Heart left ventricle (tissue), 16 donors: ENCODE measurements at regions of chr10 and their contacts with region 1.

Region 1: GRCh38 chr10:69004821-69005220 is 16.2 kb downstream of the KIFBP start:
- DNase-seq: no peak
- ATAC-seq: peak in 2 of 4 donors; percentile 34 to 54
- H3K4me3 ChIP-seq: no peak overlapping the region
- H3K27ac ChIP-seq: peak overlapping the region in 1 of 12 donors; percentile 30
- H3K4me1 ChIP-seq: peaks cover 0 to 5% (median 0%) of the 10 kb centered on the region in 12 donors
- H3K27me3 ChIP-seq: no peaks in the 10 kb centered on the region
- CTCF ChIP-seq: peak; percentile 26 to 72 (median 58)
- POLR2A ChIP-seq: no peak

Region 2: GRCh38 chr10:69045441-69046300 is 40.9 kb after region 1 on chr10:
- intact Hi-C with region 1: loop called in 5 of 10 experiments (anchors 5 kb)
- DNase-seq: no peak
- ATAC-seq: peak in 3 of 4 donors; percentile 10 to 49 (median 35)
- H3K4me3 ChIP-seq: no peak overlapping the region
- H3K27ac ChIP-seq: peak overlapping the region in 4 of 12 donors; percentile 7 to 98 (median 31)
- H3K4me1 ChIP-seq: peaks cover 0 to 68% (median 0%) of the 10 kb centered on the region in 12 donors
- H3K27me3 ChIP-seq: no peaks in the 10 kb centered on the region
- CTCF ChIP-seq: no peak
- POLR2A ChIP-seq: no peak

Region 3: GRCh38 chr10:69051303-69051702 is 46.5 kb after region 1 on chr10:
- intact Hi-C with region 1: loop called in 5 of 10 experiments (anchors 5 kb)
- DNase-seq: peak in 4 of 5 donors; percentile 45 to 63 (median 52)
- ATAC-seq: peak; percentile 17 to 64 (median 34)
- H3K4me3 ChIP-seq: no peak overlapping the region
- H3K27ac ChIP-seq: peak overlapping the region in 10 of 12 donors; percentile 4 to 98 (median 74)
- H3K4me1 ChIP-seq: peaks cover 0 to 93% (median 8%) of the 10 kb centered on the region in 12 donors
- H3K27me3 ChIP-seq: no peaks in the 10 kb centered on the region
- CTCF ChIP-seq: no peak
- POLR2A ChIP-seq: no peak

Region 4: DNA sequence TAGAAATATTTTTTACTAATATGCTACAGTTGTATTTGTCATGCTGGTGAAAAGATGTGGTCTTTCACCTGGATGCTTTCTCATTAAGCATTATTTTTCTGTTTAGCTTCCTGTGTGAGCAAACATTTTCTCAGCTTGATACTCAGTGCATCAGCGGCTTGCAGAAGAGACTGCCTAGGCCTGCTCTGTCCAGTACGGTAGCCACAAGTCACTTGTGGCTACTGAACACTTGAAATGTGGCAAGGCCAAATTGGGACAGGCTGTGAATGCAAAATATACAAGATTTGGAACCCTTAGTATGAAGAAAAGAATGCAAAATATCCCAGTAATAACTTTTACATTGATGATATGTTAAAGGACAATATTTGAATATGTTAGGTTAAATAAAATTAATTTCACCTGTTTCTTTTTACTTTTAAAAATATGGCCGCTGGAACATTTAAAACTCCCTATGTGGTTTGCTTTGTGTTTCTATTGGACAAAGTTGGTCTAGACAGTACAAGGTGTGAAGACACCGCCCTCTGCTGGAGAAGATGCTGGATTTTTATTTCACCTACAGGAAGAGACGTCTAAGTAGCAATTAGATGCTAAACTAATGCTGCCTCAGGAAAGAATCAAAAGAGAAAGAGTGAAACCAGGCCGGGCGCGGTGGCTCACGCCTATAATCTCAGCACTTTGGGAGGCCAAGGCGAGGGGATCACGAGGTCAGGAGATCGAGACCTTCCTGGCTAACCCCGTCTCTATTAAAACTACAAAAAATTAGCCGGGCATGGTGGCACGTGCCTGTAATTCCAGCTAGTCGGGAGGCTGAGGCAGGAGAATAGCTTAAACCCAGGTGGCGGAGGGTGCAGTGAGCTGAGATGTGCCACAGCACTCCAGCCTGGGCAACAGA is 88.4 kb after region 1 on chr10:
- intact Hi-C with region 1: loop called (anchors 1 to 5 kb)
- DNase-seq: peak in 4 of 5 donors; percentile 68 to 83 (median 78)
- ATAC-seq: peak; percentile 57 to 91 (median 76)
- H3K4me3 ChIP-seq: peak overlapping the region in 1 of 12 donors; percentile 33
- H3K27ac ChIP-seq: peak overlapping the region in 5 of 12 donors; percentile 6 to 97 (median 40)
- H3K4me1 ChIP-seq: peaks cover 0 to 65% (median 8%) of the 10 kb centered on the region in 12 donors
- H3K27me3 ChIP-seq: no peaks in the 10 kb centered on the region
- CTCF ChIP-seq: peak; percentile 71 to 90 (median 84)
- POLR2A ChIP-seq: no peak

Region 5: DNA sequence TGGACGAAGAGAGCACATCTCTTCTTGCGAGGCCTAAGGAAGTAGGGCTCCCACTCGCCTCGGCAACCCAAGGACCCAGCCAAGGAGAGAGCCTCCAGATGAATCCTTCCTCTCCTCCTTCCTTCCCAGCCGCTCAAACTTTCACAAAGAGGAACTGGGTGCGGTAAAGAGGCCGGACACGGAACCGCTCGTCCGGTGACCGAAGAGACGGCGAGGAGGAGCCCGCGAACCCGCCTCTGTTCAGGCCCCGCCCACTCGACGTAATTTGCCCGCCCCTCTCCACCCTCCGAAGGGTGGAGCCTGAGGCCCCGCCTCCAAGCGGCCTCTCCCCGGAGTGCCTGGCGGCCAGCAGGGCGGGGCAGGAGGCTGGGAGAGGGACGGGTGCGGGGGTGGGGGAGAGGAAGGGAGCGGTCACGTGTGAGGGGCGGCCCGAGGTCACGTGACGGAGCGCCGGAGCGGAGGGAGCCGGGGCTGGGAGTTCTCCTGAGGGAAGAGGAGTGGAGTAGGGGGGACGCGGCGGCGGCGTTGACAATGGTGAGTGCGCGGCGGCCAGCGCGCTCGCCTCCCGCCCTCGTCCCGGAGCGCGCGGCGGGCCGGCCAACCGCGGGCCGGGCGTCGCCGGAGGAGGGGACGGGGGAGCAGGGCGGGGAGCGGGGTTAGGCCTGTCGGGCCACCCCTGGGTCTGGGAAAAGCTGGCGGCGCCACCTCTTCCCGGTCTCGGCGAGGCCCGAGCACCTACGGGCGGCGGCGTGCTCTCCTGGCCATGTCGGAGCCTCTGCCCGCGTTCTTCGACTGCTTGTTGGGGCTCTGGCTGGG is 119.1 kb after region 1 on chr10 and contains the start of gene VPS26A:
- intact Hi-C with region 1: loop called in 2 of 10 experiments (anchors 5 kb)
- DNase-seq: peak; percentile 99 to 100 (median 99)
- ATAC-seq: peak; percentile 98 to 99 (median 99)
- H3K4me3 ChIP-seq: peak within 1 kb of the TSS; percentile 50 to 100 (median 96)
- H3K27ac ChIP-seq: peak within 1 kb of the TSS; percentile 91 to 99 (median 96)
- H3K4me1 ChIP-seq: peaks cover 0 to 38% (median 16%) of the 10 kb centered on the region in 12 donors
- H3K27me3 ChIP-seq: no peaks in the 10 kb centered on the region
- CTCF ChIP-seq: peak in 7 of 12 donors; percentile 10 to 59 (median 36)
- POLR2A ChIP-seq: peak; percentile 80 to 95
- total RNA-seq, gene VPS26A: 15.5 to 42.3 (median 34.8) TPM

Region 6: DNA sequence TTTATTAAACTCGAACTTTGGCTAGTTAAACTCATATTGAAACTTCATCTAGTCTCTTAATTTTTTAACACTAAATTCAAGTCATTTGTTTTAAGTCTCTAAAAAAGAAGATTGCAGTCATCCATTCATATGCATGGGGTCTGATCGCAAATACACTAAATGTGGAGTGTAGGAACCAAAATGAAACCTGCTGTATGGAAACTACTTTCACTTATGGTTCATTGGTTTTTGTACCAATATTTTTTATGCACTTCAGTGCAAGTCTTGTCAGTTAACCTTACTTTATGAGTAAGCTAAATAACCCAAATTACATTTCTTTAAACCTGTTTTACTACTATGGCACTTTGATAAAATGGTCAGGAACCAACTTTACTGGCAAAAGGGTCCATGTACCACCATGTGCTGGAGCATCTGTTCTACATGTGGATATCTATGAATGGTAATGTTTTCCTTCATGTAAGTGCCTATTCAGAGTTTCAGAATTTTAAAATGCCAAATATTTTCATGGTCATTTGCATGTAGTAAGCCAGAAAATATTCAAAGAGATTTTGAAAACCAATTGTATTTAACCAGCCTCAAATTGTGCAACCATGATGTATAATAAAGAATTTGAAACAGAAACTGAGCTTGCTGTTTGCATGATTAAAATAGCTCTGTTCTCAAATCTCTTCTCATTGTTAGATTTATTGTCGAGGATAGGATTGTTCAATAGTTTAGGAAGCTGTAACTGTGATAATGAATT is 167.6 kb after region 1 on chr10:
- intact Hi-C with region 1: loop called in 1 of 10 experiments (anchors 5 kb)
- DNase-seq: no peak
- ATAC-seq: no peak
- H3K4me3 ChIP-seq: no peak overlapping the region
- H3K27ac ChIP-seq: no peak overlapping the region
- H3K4me1 ChIP-seq: peaks cover 0 to 5% (median 0%) of the 10 kb centered on the region in 12 donors
- H3K27me3 ChIP-seq: no peaks in the 10 kb centered on the region
- CTCF ChIP-seq: no peak
- POLR2A ChIP-seq: no peak

Region 7: GRCh38 chr10:69179743-69180524 is 175.1 kb after region 1 on chr10 and contains the start of gene SUPV3L1:
- intact Hi-C with region 1: loop called in 1 of 10 experiments (anchors 10 kb)
- DNase-seq: peak; percentile 91 to 97 (median 91)
- ATAC-seq: peak; percentile 96 to 98 (median 97)
- H3K4me3 ChIP-seq: peak within 1 kb of the TSS; percentile 82 to 99 (median 94)
- H3K27ac ChIP-seq: peak within 1 kb of the TSS; percentile 84 to 98 (median 94)
- H3K4me1 ChIP-seq: peaks cover 0 to 38% (median 26%) of the 10 kb centered on the region in 12 donors
- H3K27me3 ChIP-seq: no peaks in the 10 kb centered on the region
- CTCF ChIP-seq: no peak
- POLR2A ChIP-seq: peak; percentile 43 to 62
- total RNA-seq, gene SUPV3L1: 26.6 to 53.4 (median 34.9) TPM